CD4-positive, alpha-beta T cell (primary cell): ENCODE measurements at regions of chr19 and their contacts with region 1.

Region 1: DNA sequence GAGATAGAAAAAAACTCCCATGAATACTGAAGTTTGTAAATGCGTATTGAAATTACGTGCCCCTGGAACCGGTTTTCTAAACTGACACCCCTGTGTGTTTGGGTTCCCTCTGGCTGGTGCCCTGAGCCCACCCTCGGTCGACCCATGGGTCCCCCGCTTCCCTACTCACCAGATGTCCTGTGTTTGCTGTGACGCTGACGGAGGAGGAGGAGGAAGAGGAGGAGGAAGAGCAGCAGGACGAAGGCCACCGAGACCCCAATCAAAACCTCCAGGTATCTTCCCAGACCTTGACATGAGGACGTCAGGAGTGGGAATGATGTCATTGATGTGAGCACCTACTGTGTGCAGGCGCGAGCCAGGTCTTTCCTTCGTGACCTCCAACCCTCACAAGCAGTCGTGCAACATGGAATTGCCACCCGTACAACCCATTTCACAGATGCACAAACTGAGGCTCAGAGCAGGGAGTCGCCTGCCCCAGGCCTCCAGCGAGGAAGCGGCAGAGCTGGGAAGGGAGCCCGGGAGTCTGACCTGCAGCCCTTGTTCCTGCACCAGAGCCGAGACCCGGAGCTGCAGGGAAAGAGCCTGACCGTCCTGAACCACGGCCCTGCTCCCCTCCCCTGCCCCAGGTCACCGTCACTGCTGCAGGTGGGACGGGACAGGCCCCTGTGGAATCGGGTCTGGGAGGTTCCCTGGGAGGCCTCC is 3.7 kb downstream of the LILRB3 start:
- DNase-seq: no peak
- ATAC-seq: no peak
- H3K4me3 ChIP-seq: no peak overlapping the region
- H3K4me3 Mint-ChIP-seq: no peak overlapping the region
- H3K27ac ChIP-seq: no peak overlapping the region
- H3K27ac Mint-ChIP-seq: no peak overlapping the region
- H3K4me1 ChIP-seq: peaks cover 8% of the 10 kb centered on the region
- H3K4me1 Mint-ChIP-seq: no peaks in the 10 kb centered on the region
- H3K27me3 ChIP-seq: peaks cover 0 to 2% of the 10 kb centered on the region in 2 experiments
- H3K27me3 Mint-ChIP-seq: peaks cover 3% of the 10 kb centered on the region
- CTCF ChIP-seq: no peak

Region 2: DNA sequence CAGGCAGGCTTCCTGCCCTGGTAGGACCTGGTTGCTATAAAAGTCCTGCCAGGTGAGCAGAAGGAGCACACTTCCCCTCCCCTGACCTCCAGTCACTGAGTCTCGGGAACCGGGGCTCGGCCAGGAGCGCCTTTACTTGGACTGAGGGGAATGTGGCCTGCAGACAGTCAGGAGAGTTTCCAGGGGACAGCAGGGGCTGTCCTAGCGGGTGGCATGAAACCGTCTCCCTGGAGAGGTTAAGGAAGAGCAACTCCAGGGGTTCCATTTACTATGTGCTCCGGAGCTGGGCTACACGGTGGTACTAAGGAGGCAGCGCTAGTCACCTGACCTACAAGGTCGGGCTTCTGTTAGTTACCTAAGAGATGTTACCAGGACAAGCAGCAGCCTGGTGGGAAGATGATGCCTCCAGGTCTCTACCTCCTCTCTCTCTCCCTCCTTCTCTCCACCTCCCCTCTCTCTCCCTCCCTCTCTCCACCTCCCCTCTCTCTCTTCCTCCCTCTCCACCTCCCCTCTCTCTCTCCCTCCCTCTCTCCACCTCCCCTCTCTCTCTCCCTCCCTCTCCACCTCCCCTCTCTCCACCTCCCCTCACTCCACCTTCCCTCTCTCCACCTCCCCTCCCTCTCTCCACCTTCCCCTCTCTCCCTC is 85.7 kb before region 1 on chr19:
- CTCF ChIA-PET with region 1: no interaction called
- POLR2A ChIA-PET with region 1: no interaction called
- intact Hi-C with region 1: no loop called
- DNase-seq: peak in 2 of 14 experiments; percentile 72 to 85
- ATAC-seq: no peak
- H3K4me3 ChIP-seq: no peak overlapping the region
- H3K4me3 Mint-ChIP-seq: no peak overlapping the region
- H3K27ac ChIP-seq: peak overlapping the region in 1 of 2 donors; percentile 1
- H3K27ac Mint-ChIP-seq: no peak overlapping the region
- H3K4me1 ChIP-seq: peaks cover 20% of the 10 kb centered on the region
- H3K4me1 Mint-ChIP-seq: peaks cover 17% of the 10 kb centered on the region
- H3K27me3 ChIP-seq: no peaks in the 10 kb centered on the region
- H3K27me3 Mint-ChIP-seq: no peaks in the 10 kb centered on the region
- CTCF ChIP-seq: no peak

Region 3: DNA sequence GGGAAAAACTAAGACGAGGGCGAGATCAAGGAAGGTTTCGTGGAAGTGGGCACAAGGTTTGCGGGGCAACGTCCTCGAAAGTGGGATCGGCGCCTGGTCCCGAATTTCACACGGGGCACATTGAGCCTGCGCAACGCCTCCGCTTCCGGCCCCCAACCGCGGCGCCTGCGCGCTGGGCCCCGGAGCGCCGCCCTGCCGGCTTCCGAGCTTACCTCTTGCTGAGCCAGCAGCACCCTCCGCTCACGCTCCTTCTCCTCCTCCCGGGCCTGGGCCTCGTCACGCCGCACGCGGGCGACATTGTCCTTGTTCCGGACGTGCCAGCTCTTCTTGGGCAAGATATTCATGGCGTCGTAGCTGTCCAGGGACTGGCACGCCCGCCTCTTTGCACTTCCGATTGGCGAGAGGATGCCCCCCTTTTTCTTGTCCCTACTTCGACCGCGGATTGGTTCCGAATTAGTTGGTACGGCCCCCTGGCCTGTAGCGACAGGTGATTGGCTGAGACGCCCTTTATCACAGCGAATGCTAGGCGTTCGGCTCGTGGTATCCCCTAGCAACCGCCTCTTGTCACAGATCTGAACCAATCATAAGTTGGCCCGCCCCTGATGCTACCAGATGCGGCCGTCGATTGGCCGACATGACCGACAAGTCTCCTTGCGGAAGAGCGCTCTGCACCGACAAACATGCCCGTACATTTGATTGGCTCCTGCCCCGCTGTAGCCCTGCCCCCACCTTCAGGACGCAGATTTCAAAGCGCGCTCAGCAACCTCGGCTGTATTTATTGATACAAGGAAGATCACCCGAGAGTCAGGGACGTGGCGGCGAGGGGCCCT is 59.5 kb before region 1 on chr19 and contains the start of gene LENG1:
- CTCF ChIA-PET with region 1: no interaction called
- POLR2A ChIA-PET with region 1: no interaction called
- intact Hi-C with region 1: no loop called
- DNase-seq: peak; percentile 91 to 100 (median 98)
- ATAC-seq: peak; percentile 84
- H3K4me3 ChIP-seq: peak within 1 kb of the TSS; percentile 90
- H3K4me3 Mint-ChIP-seq: peak within 1 kb of the TSS; percentile 98
- H3K27ac ChIP-seq: peak within 1 kb of the TSS; percentile 86 to 92
- H3K27ac Mint-ChIP-seq: peak within 1 kb of the TSS; percentile 94
- H3K4me1 ChIP-seq: peaks cover 81% of the 10 kb centered on the region
- H3K4me1 Mint-ChIP-seq: peaks cover 55% of the 10 kb centered on the region
- H3K27me3 ChIP-seq: no peaks in the 10 kb centered on the region
- H3K27me3 Mint-ChIP-seq: no peaks in the 10 kb centered on the region
- CTCF ChIP-seq: no peak
- total RNA-seq, gene LENG1: 14.4 to 16.0 TPM

Region 4: GRCh38 chr19:54239051-54239450 is 19.9 kb after region 1 on chr19:
- CTCF ChIA-PET with region 1: no interaction called
- POLR2A ChIA-PET with region 1: no interaction called
- intact Hi-C with region 1: loop called in 1 of 2 experiments (anchors 2 kb)
- DNase-seq: no peak
- ATAC-seq: no peak
- H3K4me3 ChIP-seq: no peak overlapping the region
- H3K4me3 Mint-ChIP-seq: no peak overlapping the region
- H3K27ac ChIP-seq: no peak overlapping the region
- H3K27ac Mint-ChIP-seq: no peak overlapping the region
- H3K4me1 ChIP-seq: peaks cover 6% of the 10 kb centered on the region
- H3K4me1 Mint-ChIP-seq: no peaks in the 10 kb centered on the region
- H3K27me3 ChIP-seq: peaks cover 11 to 15% of the 10 kb centered on the region in 2 experiments
- H3K27me3 Mint-ChIP-seq: peaks cover 17% of the 10 kb centered on the region
- CTCF ChIP-seq: no peak

Region 5: DNA sequence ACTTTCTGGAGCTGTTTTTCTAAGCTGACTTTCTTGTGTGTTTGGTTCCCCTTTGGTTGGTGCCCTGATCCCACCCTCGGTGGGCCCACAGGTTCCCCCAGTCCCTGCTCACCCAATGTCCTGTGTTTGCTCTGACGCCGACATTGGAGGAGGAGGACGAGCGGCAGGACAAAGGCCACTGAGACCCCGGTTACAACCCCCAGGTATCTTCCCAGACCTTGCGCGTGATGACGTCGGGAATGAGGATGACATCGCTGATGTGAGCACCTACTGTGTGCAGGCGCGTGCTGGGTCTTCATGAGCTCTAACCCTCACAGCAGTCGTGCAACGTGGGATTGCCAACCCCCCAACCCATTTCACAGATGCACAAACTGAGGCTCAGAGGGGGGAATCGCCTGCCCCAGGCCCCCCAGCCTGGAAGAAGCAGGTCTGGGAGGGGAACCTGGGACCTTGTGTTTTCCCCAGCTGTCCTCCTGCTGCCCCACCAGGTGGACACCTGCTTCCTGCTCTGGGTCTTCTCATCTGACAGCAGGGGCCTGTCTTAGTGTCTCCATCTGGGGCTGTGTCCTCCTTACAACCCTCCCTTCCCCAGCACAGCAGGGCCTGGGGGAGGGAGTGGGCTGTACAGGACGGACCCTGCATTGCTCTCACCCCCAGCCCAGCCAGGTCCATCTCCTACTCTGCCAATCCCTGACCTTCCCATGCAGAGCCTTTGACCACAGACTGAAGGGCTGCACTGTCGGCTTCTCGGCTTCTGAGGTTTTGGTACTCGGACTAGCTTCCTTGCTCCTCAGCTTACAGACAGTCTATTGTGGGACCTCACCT is 28.2 kb after region 1 on chr19:
- CTCF ChIA-PET with region 1: interaction called, 3 read pairs
- POLR2A ChIA-PET with region 1: no interaction called
- intact Hi-C with region 1: loop called in 1 of 2 experiments (anchors 2 kb)
- DNase-seq: no peak
- ATAC-seq: no peak
- H3K4me3 ChIP-seq: no peak overlapping the region
- H3K4me3 Mint-ChIP-seq: peak overlapping the region; percentile 2
- H3K27ac ChIP-seq: peak overlapping the region in 1 of 2 donors; percentile 29
- H3K27ac Mint-ChIP-seq: peak overlapping the region; percentile 1
- H3K4me1 ChIP-seq: peaks cover 22% of the 10 kb centered on the region
- H3K4me1 Mint-ChIP-seq: peaks cover 15% of the 10 kb centered on the region
- H3K27me3 ChIP-seq: no peaks in the 10 kb centered on the region
- H3K27me3 Mint-ChIP-seq: no peaks in the 10 kb centered on the region
- CTCF ChIP-seq: no peak